GM12878 (cell line): ENCODE measurements at regions of chr3 and their contacts with region 1.

Region 1: GRCh38 chr3:11335056-11335608 is 62.9 kb downstream of the ATG7 start:
- DNase-seq: peak; percentile 5
- ATAC-seq: peak; percentile 87
- H3K4me3 ChIP-seq: no peak overlapping the region
- H3K27ac ChIP-seq: no peak overlapping the region
- H3K4me1 ChIP-seq: no peaks in the 10 kb centered on the region
- H3K27me3 ChIP-seq: no peaks in the 10 kb centered on the region
- CTCF ChIP-seq: peak; percentile 45 to 72 (median 55); a peak in 4 of 6 replicates
- EP300 ChIP-seq: no peak
- POLR2A ChIP-seq: no peak
- RAD21 ChIP-seq: peak; percentile 83

Region 2: GRCh38 chr3:10883478-10884234 is 451.5 kb before region 1 on chr3:
- CTCF ChIA-PET with region 1: no interaction called
- POLR2A ChIA-PET with region 1: no interaction called
- RAD21 ChIA-PET with region 1: no interaction called
- SMC1A ChIA-PET with region 1: no interaction called
- in situ Hi-C with region 1: no loop called
- intact Hi-C with region 1: no loop called
- DNase-seq: no peak
- ATAC-seq: no peak
- H3K4me3 ChIP-seq: no peak overlapping the region
- H3K27ac ChIP-seq: no peak overlapping the region
- H3K4me1 ChIP-seq: no peaks in the 10 kb centered on the region
- H3K27me3 ChIP-seq: peaks cover 2% of the 10 kb centered on the region in 2 experiments; a peak in 3 of 4 replicates
- CTCF ChIP-seq: peak; percentile 38 to 56 (median 48); a peak in 5 of 6 replicates
- EP300 ChIP-seq: no peak
- POLR2A ChIP-seq: no peak
- RAD21 ChIP-seq: 0 out of 2 replicates have a peak, but pooled peaks have one; percentile 40

Region 3: GRCh38 chr3:11060500-11061251 is 274.5 kb before region 1 on chr3:
- CTCF ChIA-PET with region 1: interaction called, 7 read pairs
- POLR2A ChIA-PET with region 1: no interaction called
- RAD21 ChIA-PET with region 1: no interaction called
- SMC1A ChIA-PET with region 1: interaction called, 3 read pairs
- in situ Hi-C with region 1: loop called (anchors 10 kb)
- intact Hi-C with region 1: loop called (anchors 5 kb)
- DNase-seq: no peak
- ATAC-seq: peak; percentile 91
- H3K4me3 ChIP-seq: no peak overlapping the region
- H3K27ac ChIP-seq: no peak overlapping the region
- H3K4me1 ChIP-seq: no peaks in the 10 kb centered on the region
- H3K27me3 ChIP-seq: peaks cover 0 to 3% of the 10 kb centered on the region in 2 experiments; a peak in 2 of 4 replicates
- CTCF ChIP-seq: peak; percentile 59 to 71 (median 66)
- EP300 ChIP-seq: no peak
- POLR2A ChIP-seq: no peak
- RAD21 ChIP-seq: peak; percentile 41

Region 4: GRCh38 chr3:11244126-11244677 is 90.9 kb before region 1 on chr3:
- CTCF ChIA-PET with region 1: interaction called, 116 read pairs
- POLR2A ChIA-PET with region 1: no interaction called
- RAD21 ChIA-PET with region 1: interaction called, 54 read pairs
- SMC1A ChIA-PET with region 1: interaction called, 66 read pairs
- in situ Hi-C with region 1: loop called (anchors 5 kb)
- intact Hi-C with region 1: no loop called
- DNase-seq: no peak
- ATAC-seq: no peak
- H3K4me3 ChIP-seq: no peak overlapping the region
- H3K27ac ChIP-seq: no peak overlapping the region
- H3K4me1 ChIP-seq: no peaks in the 10 kb centered on the region
- H3K27me3 ChIP-seq: no peaks in the 10 kb centered on the region
- CTCF ChIP-seq: no peak
- EP300 ChIP-seq: no peak
- POLR2A ChIP-seq: no peak
- RAD21 ChIP-seq: no peak

Region 5: GRCh38 chr3:11260460-11260859 is 74.7 kb before region 1 on chr3:
- CTCF ChIA-PET with region 1: interaction called, 39 read pairs
- POLR2A ChIA-PET with region 1: no interaction called
- RAD21 ChIA-PET with region 1: interaction called, 7 read pairs
- SMC1A ChIA-PET with region 1: interaction called, 18 read pairs
- in situ Hi-C with region 1: no loop called
- intact Hi-C with region 1: no loop called
- DNase-seq: no peak
- ATAC-seq: no peak
- H3K4me3 ChIP-seq: no peak overlapping the region
- H3K27ac ChIP-seq: no peak overlapping the region
- H3K4me1 ChIP-seq: no peaks in the 10 kb centered on the region
- H3K27me3 ChIP-seq: peaks cover 0 to 2% of the 10 kb centered on the region in 2 experiments; a peak in 2 of 4 replicates
- CTCF ChIP-seq: peak in 2 of 3 experiments; percentile 11 to 19; a peak in 1 of 6 replicates
- EP300 ChIP-seq: no peak
- POLR2A ChIP-seq: no peak
- RAD21 ChIP-seq: peak; percentile 47; the same call in 1 of the 2 replicates

Region 6: GRCh38 chr3:11288786-11289682 is 46.1 kb before region 1 on chr3:
- CTCF ChIA-PET with region 1: interaction called, 31 read pairs
- POLR2A ChIA-PET with region 1: no interaction called
- RAD21 ChIA-PET with region 1: interaction called, 11 read pairs
- SMC1A ChIA-PET with region 1: interaction called, 24 read pairs
- in situ Hi-C with region 1: no loop called
- intact Hi-C with region 1: no loop called
- DNase-seq: peak; percentile 71
- ATAC-seq: peak; percentile 85
- H3K4me3 ChIP-seq: peak overlapping the region; percentile 30; the same call in 1 of the 2 replicates
- H3K27ac ChIP-seq: peak overlapping the region; percentile 91
- H3K4me1 ChIP-seq: peaks cover 36% of the 10 kb centered on the region
- H3K27me3 ChIP-seq: no peaks in the 10 kb centered on the region
- CTCF ChIP-seq: 0 out of 6 replicates have a peak, but pooled peaks of 1 of the 3 experiments have one; percentile 3
- EP300 ChIP-seq: peak; percentile 50 to 57; a peak in 2 of 4 replicates
- POLR2A ChIP-seq: no peak
- RAD21 ChIP-seq: no peak

Region 7: GRCh38 chr3:11350374-11350773 is 15.2 kb after region 1 on chr3:
- CTCF ChIA-PET with region 1: interaction called, 14 read pairs
- POLR2A ChIA-PET with region 1: interaction called, 4 read pairs
- RAD21 ChIA-PET with region 1: no interaction called
- SMC1A ChIA-PET with region 1: interaction called, 5 read pairs
- in situ Hi-C with region 1: no loop called
- intact Hi-C with region 1: no loop called
- DNase-seq: no peak
- ATAC-seq: no peak
- H3K4me3 ChIP-seq: no peak overlapping the region
- H3K27ac ChIP-seq: no peak overlapping the region
- H3K4me1 ChIP-seq: no peaks in the 10 kb centered on the region
- H3K27me3 ChIP-seq: no peaks in the 10 kb centered on the region
- CTCF ChIP-seq: no peak
- EP300 ChIP-seq: no peak
- POLR2A ChIP-seq: no peak
- RAD21 ChIP-seq: no peak